Activated B cell treated with CpG ODN at 0.5 μM for 24 hours (primary cell): ENCODE measurements at regions of chr16 and their contacts with region 1.

Region 1: DNA sequence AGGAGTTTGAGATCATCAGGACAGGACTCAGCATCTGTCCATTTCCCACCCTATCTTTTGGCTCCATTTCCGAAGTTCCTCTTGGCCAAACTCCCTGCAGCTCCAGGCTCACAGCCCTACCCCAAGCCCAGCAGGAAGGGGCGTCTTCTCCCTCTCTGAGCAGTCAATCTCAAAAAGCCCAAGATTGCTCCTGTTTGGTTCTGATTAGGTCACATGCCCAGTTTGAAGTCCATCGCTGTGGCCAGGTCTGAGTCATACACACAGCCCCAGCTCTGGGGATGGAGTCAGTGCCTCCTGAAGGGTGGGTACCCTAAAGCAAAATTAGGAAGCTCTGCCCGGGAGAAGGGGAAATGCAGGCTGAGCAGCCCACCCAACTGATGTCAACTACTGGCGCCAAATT is 23.9 kb downstream of the SNX20 start:
- DNase-seq: no peak
- ATAC-seq: no peak
- H3K4me3 Mint-ChIP-seq: no peak overlapping the region
- H3K27ac Mint-ChIP-seq: no peak overlapping the region
- H3K4me1 Mint-ChIP-seq: no peaks in the 10 kb centered on the region
- H3K27me3 Mint-ChIP-seq: peaks cover 1% of the 10 kb centered on the region
- CTCF ChIP-seq: no peak

Region 2: GRCh38 chr16:50093607-50094539 is 563.4 kb before region 1 on chr16:
- CTCF ChIA-PET with region 1: no interaction called
- POLR2A ChIA-PET with region 1: interaction called, 10 read pairs
- intact Hi-C with region 1: no loop called
- DNase-seq: no peak
- ATAC-seq: no peak
- H3K4me3 Mint-ChIP-seq: no peak overlapping the region
- H3K27ac Mint-ChIP-seq: no peak overlapping the region
- H3K4me1 Mint-ChIP-seq: no peaks in the 10 kb centered on the region
- H3K27me3 Mint-ChIP-seq: no peaks in the 10 kb centered on the region
- CTCF ChIP-seq: no peak

Region 3: DNA sequence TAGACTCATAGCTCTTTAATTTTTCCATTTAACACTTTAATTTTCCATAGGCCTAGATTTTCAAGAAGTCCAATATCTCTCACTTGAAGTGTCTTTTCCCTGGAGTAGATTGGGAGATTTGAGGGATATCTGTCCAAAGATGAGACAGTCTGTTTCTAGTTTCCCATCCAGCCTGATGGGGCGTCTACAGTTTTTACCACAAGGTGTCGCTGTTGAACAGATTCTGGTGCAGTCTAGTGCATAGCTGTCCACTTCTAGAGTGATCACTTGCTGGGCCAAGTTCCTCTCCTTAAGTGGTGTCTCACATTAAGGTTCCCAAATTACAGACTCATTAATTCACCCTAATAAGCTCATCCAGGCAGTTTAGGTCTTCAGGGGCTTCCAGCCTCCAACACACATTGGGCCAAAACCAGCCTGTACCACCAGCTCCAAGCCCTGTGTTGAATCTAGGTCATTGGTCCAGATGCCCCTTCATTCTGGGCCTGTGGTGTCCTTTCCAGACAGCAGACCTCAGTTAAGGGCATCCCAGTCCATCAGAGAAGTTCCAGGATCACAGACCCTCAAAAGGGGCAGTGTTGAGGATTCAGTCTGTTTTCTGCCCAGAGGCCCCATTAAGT is 14.5 kb after region 1 on chr16:
- CTCF ChIA-PET with region 1: no interaction called
- POLR2A ChIA-PET with region 1: no interaction called
- intact Hi-C with region 1: no loop called
- DNase-seq: no peak
- ATAC-seq: peak; percentile 36
- H3K4me3 Mint-ChIP-seq: no peak overlapping the region
- H3K27ac Mint-ChIP-seq: peak overlapping the region; percentile 46
- H3K4me1 Mint-ChIP-seq: peaks cover 7% of the 10 kb centered on the region
- H3K27me3 Mint-ChIP-seq: no peaks in the 10 kb centered on the region
- CTCF ChIP-seq: no peak